ENCODE measurements at regions of chr20 and their contacts with region 1.

Region 1: GRCh38 chr20:41095110-41095969 is 42.0 kb upstream of the PLCG1 start:
- DNase-seq: peak in 2 of 3 donors; percentile 55 to 72
- ATAC-seq: peak; percentile 80
- H3K4me3 ChIP-seq: no peak overlapping the region
- H3K4me1 ChIP-seq: no peaks in the 10 kb centered on the region
- CTCF ChIP-seq: peak; percentile 64

Region 2: GRCh38 chr20:40962730-40963504 is 132.4 kb before region 1 on chr20:
- intact Hi-C with region 1: loop called in 1 of 2 experiments (anchors 5 kb)
- DNase-seq: peak; percentile 60 to 76 (median 68)
- ATAC-seq: peak; percentile 91
- H3K4me3 ChIP-seq: no peak overlapping the region
- H3K4me1 ChIP-seq: peaks cover 3% of the 10 kb centered on the region
- CTCF ChIP-seq: peak; percentile 83

Region 3: GRCh38 chr20:40990542-40991120 is 104.7 kb before region 1 on chr20:
- intact Hi-C with region 1: loop called (anchors 5 kb)
- DNase-seq: peak; percentile 69 to 91 (median 85)
- ATAC-seq: peak; percentile 97
- H3K4me3 ChIP-seq: no peak overlapping the region
- H3K4me1 ChIP-seq: peaks cover 7% of the 10 kb centered on the region
- CTCF ChIP-seq: peak; percentile 71

Measured in mucosa of descending colon (tissue), 3 donors.